Keratinocyte (primary cell): ENCODE measurements at regions of chr20 and their contacts with region 1.

Region 1: GRCh38 chr20:54668271-54669039 is 193.1 kb downstream of the DOK5 start:
- DNase-seq: no peak
- H3K4me3 ChIP-seq: no peak overlapping the region
- H3K27ac ChIP-seq: no peak overlapping the region
- H3K4me1 ChIP-seq: no peaks in the 10 kb centered on the region
- H3K27me3 ChIP-seq: no peaks in the 10 kb centered on the region
- CTCF ChIP-seq: peak; percentile 75 to 80 (median 77)

Region 2: GRCh38 chr20:54219751-54220426 is 448.6 kb before region 1 on chr20:
- dilution Hi-C with region 1: loop called (anchors 10 kb)
- DNase-seq: no peak
- H3K4me3 ChIP-seq: no peak overlapping the region
- H3K27ac ChIP-seq: no peak overlapping the region
- H3K4me1 ChIP-seq: no peaks in the 10 kb centered on the region
- H3K27me3 ChIP-seq: no peaks in the 10 kb centered on the region
- CTCF ChIP-seq: peak in 2 of 3 experiments; percentile 32 to 43